CD8-positive, alpha-beta memory T cell (primary cell): ENCODE measurements at regions of chr5 and their contacts with region 1.

Region 1: GRCh38 chr5:54944364-54944763 is 41.0 kb downstream of the ESM1 start:
- DNase-seq: peak; percentile 7 to 56 (median 45)
- H3K4me3 ChIP-seq: no peak overlapping the region
- H3K4me3 Mint-ChIP-seq: no peak overlapping the region
- H3K27ac ChIP-seq: no peak overlapping the region
- H3K27ac Mint-ChIP-seq: no peak overlapping the region
- H3K4me1 ChIP-seq: no peaks in the 10 kb centered on the region
- H3K4me1 Mint-ChIP-seq: peaks cover 0 to 5% (median 4%) of the 10 kb centered on the region in 3 donors
- H3K27me3 ChIP-seq: no peaks in the 10 kb centered on the region
- H3K27me3 Mint-ChIP-seq: no peaks in the 10 kb centered on the region

Region 2: DNA sequence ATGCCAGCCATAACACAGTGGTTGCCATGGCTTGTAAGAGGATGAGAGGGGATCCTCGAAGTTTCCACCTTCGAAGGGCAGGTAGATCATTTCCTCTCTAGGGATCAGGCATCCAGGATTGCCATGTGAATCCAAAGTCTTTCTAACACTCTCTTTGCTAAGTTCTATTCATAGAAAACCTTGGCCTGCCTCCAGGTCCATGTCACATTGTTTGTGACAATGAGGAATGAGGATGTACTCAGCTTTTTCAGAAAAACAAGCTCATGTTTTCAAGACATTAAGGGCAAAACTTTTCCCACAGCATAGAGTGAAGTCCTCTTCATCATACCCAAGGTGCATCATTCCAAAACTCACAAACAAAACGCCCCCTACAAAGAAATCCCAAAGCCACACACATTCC is 21.4 kb after region 1 on chr5:
- CTCF ChIA-PET with region 1: interaction called, 34 read pairs
- POLR2A ChIA-PET with region 1: no interaction called
- DNase-seq: no peak
- H3K4me3 ChIP-seq: no peak overlapping the region
- H3K4me3 Mint-ChIP-seq: no peak overlapping the region
- H3K27ac ChIP-seq: no peak overlapping the region
- H3K27ac Mint-ChIP-seq: no peak overlapping the region
- H3K4me1 ChIP-seq: no peaks in the 10 kb centered on the region
- H3K4me1 Mint-ChIP-seq: peaks cover 8 to 10% (median 9%) of the 10 kb centered on the region in 3 donors
- H3K27me3 ChIP-seq: no peaks in the 10 kb centered on the region
- H3K27me3 Mint-ChIP-seq: no peaks in the 10 kb centered on the region

Region 3: GRCh38 chr5:55062039-55062779 is 117.8 kb after region 1 on chr5:
- CTCF ChIA-PET with region 1: interaction called, 13 read pairs
- POLR2A ChIA-PET with region 1: no interaction called
- DNase-seq: peak; percentile 24 to 72 (median 38)
- H3K4me3 ChIP-seq: peak overlapping the region; percentile 53
- H3K4me3 Mint-ChIP-seq: peak overlapping the region; percentile 77 to 96 (median 87)
- H3K27ac ChIP-seq: peak overlapping the region; percentile 8
- H3K27ac Mint-ChIP-seq: peak overlapping the region; percentile 74 to 95 (median 88)
- H3K4me1 ChIP-seq: peaks cover 37% of the 10 kb centered on the region
- H3K4me1 Mint-ChIP-seq: peaks cover 58 to 83% (median 69%) of the 10 kb centered on the region in 3 donors
- H3K27me3 ChIP-seq: no peaks in the 10 kb centered on the region
- H3K27me3 Mint-ChIP-seq: no peaks in the 10 kb centered on the region

Region 4: GRCh38 chr5:55081541-55081940 is 137.2 kb after region 1 on chr5:
- CTCF ChIA-PET with region 1: no interaction called
- POLR2A ChIA-PET with region 1: no interaction called
- DNase-seq: no peak
- H3K4me3 ChIP-seq: no peak overlapping the region
- H3K4me3 Mint-ChIP-seq: no peak overlapping the region
- H3K27ac ChIP-seq: no peak overlapping the region
- H3K27ac Mint-ChIP-seq: no peak overlapping the region
- H3K4me1 ChIP-seq: no peaks in the 10 kb centered on the region
- H3K4me1 Mint-ChIP-seq: peaks cover 6 to 13% (median 7%) of the 10 kb centered on the region in 3 donors
- H3K27me3 ChIP-seq: no peaks in the 10 kb centered on the region
- H3K27me3 Mint-ChIP-seq: no peaks in the 10 kb centered on the region

Region 5: DNA sequence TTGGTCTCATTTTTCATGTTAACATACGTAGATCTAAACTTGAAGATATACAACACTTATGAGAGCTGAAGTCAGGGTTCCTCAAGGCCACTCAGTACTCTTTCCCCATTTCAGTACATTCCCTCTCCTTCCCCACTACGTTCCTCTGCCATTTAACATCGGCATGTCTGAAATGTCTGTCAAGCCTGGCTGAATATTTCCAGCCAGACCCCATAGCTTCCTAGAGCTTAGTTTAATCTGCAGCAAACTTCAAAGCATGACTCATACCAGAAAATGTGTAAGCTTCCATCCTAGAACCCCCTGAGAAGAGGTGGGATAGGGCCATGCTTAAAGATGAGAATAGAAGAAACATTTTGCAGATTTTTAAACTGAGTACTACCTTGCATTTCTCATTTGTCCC is 164.3 kb after region 1 on chr5:
- CTCF ChIA-PET with region 1: interaction called, 31 read pairs
- POLR2A ChIA-PET with region 1: interaction called, 7 read pairs
- DNase-seq: no peak
- H3K4me3 ChIP-seq: no peak overlapping the region
- H3K4me3 Mint-ChIP-seq: peak overlapping the region in 4 of 7 donors; percentile 11 to 66 (median 16)
- H3K27ac ChIP-seq: no peak overlapping the region
- H3K27ac Mint-ChIP-seq: peak overlapping the region in 7 of 8 donors; percentile 40 to 78 (median 74)
- H3K4me1 ChIP-seq: peaks cover 37% of the 10 kb centered on the region
- H3K4me1 Mint-ChIP-seq: peaks cover 63 to 74% (median 66%) of the 10 kb centered on the region in 3 donors
- H3K27me3 ChIP-seq: no peaks in the 10 kb centered on the region
- H3K27me3 Mint-ChIP-seq: no peaks in the 10 kb centered on the region

Region 6: GRCh38 chr5:55151923-55152842 is 207.8 kb after region 1 on chr5:
- CTCF ChIA-PET with region 1: interaction called, 16 read pairs
- POLR2A ChIA-PET with region 1: no interaction called
- DNase-seq: no peak
- H3K4me3 ChIP-seq: no peak overlapping the region
- H3K4me3 Mint-ChIP-seq: no peak overlapping the region
- H3K27ac ChIP-seq: no peak overlapping the region
- H3K27ac Mint-ChIP-seq: no peak overlapping the region
- H3K4me1 ChIP-seq: no peaks in the 10 kb centered on the region
- H3K4me1 Mint-ChIP-seq: no peaks in the 10 kb centered on the region
- H3K27me3 ChIP-seq: no peaks in the 10 kb centered on the region
- H3K27me3 Mint-ChIP-seq: peaks cover 3 to 23% of the 10 kb centered on the region in 2 donors